PC-3 (cell line): ENCODE measurements at regions of chr4 and their contacts with region 1.

Region 1: GRCh38 chr4:134465417-134465816 is 263.8 kb upstream of the PABPC4L start:
- DNase-seq: no peak
- ATAC-seq: no peak
- H3K4me3 ChIP-seq: no peak overlapping the region
- H3K27ac ChIP-seq: no peak overlapping the region
- H3K4me1 ChIP-seq: no peaks in the 10 kb centered on the region
- H3K27me3 ChIP-seq: no peaks in the 10 kb centered on the region
- CTCF ChIP-seq: no peak

Region 2: DNA sequence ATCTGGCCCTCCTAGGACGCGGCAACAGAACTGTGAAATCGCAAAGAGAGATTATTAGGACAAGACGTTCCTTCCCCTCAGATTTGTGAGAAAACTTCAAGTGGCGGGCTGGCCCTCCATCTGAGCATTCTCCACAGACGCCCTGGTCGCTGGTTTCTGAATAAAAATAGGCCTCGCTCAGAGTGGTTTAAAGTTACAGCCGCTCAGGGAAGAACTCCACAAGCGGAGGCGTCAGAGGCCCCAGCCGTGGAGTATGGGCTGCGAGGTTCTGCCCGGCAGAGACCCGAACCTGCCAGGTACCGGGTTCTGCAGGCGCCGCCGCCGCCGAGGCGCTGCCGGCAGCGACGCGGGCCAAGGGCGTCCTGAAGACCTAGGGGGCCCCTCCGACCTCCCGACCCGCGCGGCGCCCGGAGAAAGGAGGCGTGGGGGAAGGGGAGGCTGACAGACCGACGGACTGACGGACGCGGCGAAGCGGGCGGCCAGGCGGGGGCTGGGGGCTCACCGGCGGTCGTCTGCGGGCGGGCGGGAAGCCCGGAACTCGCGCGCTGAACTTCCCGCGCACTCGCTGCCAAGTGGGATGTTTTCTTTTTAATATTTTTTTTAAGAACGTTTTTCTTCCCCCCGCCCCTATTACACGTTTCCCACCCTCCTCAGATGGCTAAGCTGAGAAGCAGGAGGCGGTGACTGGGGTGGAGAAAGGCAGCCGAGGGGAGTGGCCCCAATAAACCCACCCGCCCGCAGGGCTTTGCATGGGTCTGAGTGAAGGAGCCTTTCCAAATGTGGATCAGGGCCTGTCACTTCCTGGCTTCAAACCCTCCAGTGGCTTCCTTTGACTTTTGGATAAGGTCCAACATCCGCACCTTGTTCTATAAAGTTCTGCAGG is 264.0 kb before region 1 on chr4 and contains the start of gene PABPC4L:
- CTCF ChIA-PET with region 1: no interaction called
- POLR2A ChIA-PET with region 1: no interaction called
- intact Hi-C with region 1: loop called (anchors 10 kb)
- DNase-seq: peak; percentile 72
- ATAC-seq: peak; percentile 85
- H3K4me3 ChIP-seq: peak within 1 kb of the TSS; percentile 71
- H3K27ac ChIP-seq: peak within 1 kb of the TSS; percentile 57
- H3K4me1 ChIP-seq: peaks cover 6% of the 10 kb centered on the region
- H3K27me3 ChIP-seq: no peaks in the 10 kb centered on the region
- CTCF ChIP-seq: no peak
- total RNA-seq, gene PABPC4L: 0.47 and 1.2 TPM in 2 replicates

Region 3: GRCh38 chr4:134708616-134709015 is 243.2 kb after region 1 on chr4:
- CTCF ChIA-PET with region 1: no interaction called
- POLR2A ChIA-PET with region 1: no interaction called
- intact Hi-C with region 1: no loop called
- DNase-seq: no peak
- ATAC-seq: no peak
- H3K4me3 ChIP-seq: no peak overlapping the region
- H3K27ac ChIP-seq: no peak overlapping the region
- H3K4me1 ChIP-seq: no peaks in the 10 kb centered on the region
- H3K27me3 ChIP-seq: no peaks in the 10 kb centered on the region
- CTCF ChIP-seq: no peak